Activated CD4-positive, alpha-beta T cell treated with anti-CD3 and anti-CD28 coated beads for 36 hours (primary cell): ENCODE measurements at regions of chr10 and their contacts with region 1.

Region 1: GRCh38 chr10:110076559-110077318 is 69.0 kb downstream of the ADD3 start:
- DNase-seq: no peak
- ATAC-seq: peak; percentile 45
- H3K4me3 Mint-ChIP-seq: peak overlapping the region; percentile 75
- H3K27ac Mint-ChIP-seq: peak overlapping the region; percentile 98
- H3K4me1 Mint-ChIP-seq: peaks cover 85% of the 10 kb centered on the region
- H3K27me3 Mint-ChIP-seq: no peaks in the 10 kb centered on the region

Region 2: DNA sequence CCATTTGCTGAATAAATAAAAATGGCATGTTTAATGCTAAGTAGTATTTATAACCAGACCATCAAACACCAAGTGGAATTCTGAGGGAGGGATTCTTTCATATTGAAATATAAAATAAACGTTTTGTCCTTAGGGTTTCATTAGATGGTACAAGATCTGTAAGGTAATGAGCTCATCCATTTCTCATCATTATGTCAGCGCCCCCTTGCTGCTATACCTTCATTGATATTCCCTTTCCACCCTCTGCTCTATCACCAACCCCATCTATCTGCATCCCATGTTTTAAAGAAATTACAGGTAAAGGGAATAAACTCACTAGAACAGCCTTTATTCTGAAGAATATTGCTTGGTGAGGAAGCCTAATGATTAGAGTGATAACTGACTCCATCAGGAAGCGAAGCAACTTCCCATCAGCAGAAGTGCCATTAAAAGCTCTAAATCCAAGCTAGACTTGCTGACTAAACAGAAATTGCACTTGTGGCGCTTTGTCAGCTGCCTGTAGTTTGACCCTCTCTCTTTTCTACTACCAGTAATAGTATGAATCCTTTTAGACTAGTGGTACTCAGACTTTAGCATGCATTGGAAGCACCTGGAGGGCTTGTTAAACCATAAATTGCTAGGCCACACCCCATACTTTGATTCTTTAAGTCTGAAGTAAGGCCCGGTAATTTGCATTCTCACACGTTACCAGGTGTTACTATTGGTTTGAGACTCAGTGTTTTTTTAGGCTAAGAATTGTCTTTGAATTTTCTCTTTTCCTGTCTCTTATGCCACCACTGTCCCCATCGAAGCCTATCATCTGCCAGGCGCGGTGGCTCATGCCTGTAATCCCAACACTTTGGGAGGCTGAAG is 41.4 kb before region 1 on chr10:
- CTCF ChIA-PET with region 1: interaction called, 3 read pairs
- POLR2A ChIA-PET with region 1: no interaction called
- intact Hi-C with region 1: loop called in 1 of 2 experiments (anchors 2 kb)
- DNase-seq: peak; percentile 51
- ATAC-seq: peak; percentile 76
- H3K4me3 Mint-ChIP-seq: no peak overlapping the region
- H3K27ac Mint-ChIP-seq: peak overlapping the region; percentile 67
- H3K4me1 Mint-ChIP-seq: peaks cover 80% of the 10 kb centered on the region
- H3K27me3 Mint-ChIP-seq: no peaks in the 10 kb centered on the region

Region 3: GRCh38 chr10:110059925-110060324 is 16.8 kb before region 1 on chr10:
- CTCF ChIA-PET with region 1: interaction called, 44 read pairs
- POLR2A ChIA-PET with region 1: no interaction called
- intact Hi-C with region 1: loop called in 1 of 2 experiments (anchors 2 kb)
- DNase-seq: no peak
- ATAC-seq: no peak
- H3K4me3 Mint-ChIP-seq: no peak overlapping the region
- H3K27ac Mint-ChIP-seq: peak overlapping the region; percentile 81
- H3K4me1 Mint-ChIP-seq: peaks cover 82% of the 10 kb centered on the region
- H3K27me3 Mint-ChIP-seq: no peaks in the 10 kb centered on the region

Region 4: DNA sequence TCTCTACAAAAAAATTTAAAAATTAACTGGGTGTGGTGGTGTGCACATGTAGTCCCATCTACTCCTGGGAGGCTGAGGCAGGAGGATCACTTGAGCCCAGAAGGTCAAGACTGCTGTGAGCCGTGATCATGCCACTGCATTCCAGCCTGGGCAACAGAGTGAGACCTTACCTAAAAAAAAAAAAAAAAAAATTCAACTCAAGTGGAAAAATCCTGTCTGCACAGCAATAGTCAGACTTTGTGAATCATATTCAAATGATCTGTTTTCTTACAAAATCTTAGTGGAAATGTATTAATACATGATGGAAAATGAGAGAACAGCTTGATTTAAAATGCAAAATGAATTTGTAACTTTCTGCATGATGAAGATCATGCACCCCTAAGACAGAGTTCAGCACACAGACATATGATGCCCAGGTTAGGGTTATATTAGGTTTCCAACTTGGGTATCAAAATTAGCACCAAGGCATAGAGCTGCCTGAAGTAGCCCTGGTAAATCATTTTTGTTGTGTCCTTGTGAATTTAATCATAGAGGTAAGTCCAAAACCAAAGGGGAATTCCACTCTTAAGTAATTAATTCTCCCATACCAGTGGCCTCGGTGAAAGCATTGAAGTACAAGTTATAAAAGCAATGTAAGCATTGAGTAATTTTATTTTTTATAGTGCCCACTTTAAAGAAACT is 24.9 kb after region 1 on chr10:
- CTCF ChIA-PET with region 1: interaction called, 13 read pairs
- POLR2A ChIA-PET with region 1: interaction called, 11 read pairs
- intact Hi-C with region 1: no loop called
- DNase-seq: peak; percentile 32
- ATAC-seq: peak; percentile 78
- H3K4me3 Mint-ChIP-seq: peak overlapping the region; percentile 2
- H3K27ac Mint-ChIP-seq: peak overlapping the region; percentile 84
- H3K4me1 Mint-ChIP-seq: peaks cover 71% of the 10 kb centered on the region
- H3K27me3 Mint-ChIP-seq: no peaks in the 10 kb centered on the region